A549 (cell line): ENCODE measurements at regions of chr1 and their contacts with region 1.

Region 1: GRCh38 chr1:15028102-15028501 is 125.4 kb upstream of the TMEM51 start:
- DNase-seq: peak in 1 of 2 experiments; percentile 9
- ATAC-seq: no peak; a peak in 1 of 6 replicates
- H3K4me3 ChIP-seq: no peak overlapping the region
- H3K27ac ChIP-seq: no peak overlapping the region
- H3K4me1 ChIP-seq: no peaks in the 10 kb centered on the region
- CTCF ChIP-seq: no peak
- EP300 ChIP-seq: no peak
- POLR2A ChIP-seq: no peak
- RAD21 ChIP-seq: no peak

Region 2: GRCh38 chr1:14994148-14994547 is 34.0 kb before region 1 on chr1:
- CTCF ChIA-PET with region 1: no interaction called
- POLR2A ChIA-PET with region 1: no interaction called
- DNase-seq: no peak
- ATAC-seq: no peak
- H3K4me3 ChIP-seq: no peak overlapping the region
- H3K27ac ChIP-seq: no peak overlapping the region
- H3K4me1 ChIP-seq: no peaks in the 10 kb centered on the region; the same call in 2 of the 3 replicates
- CTCF ChIP-seq: no peak
- EP300 ChIP-seq: no peak
- POLR2A ChIP-seq: no peak
- RAD21 ChIP-seq: no peak

Region 3: GRCh38 chr1:15038232-15039016 is 10.3 kb after region 1 on chr1:
- CTCF ChIA-PET with region 1: interaction called, 16 read pairs
- POLR2A ChIA-PET with region 1: no interaction called
- DNase-seq: peak in 1 of 2 experiments; percentile 69
- ATAC-seq: peak; percentile 74 to 90; a peak in 4 of 6 replicates
- H3K4me3 ChIP-seq: no peak overlapping the region
- H3K27ac ChIP-seq: no peak overlapping the region
- H3K4me1 ChIP-seq: no peaks in the 10 kb centered on the region
- CTCF ChIP-seq: peak; percentile 43
- EP300 ChIP-seq: no peak
- POLR2A ChIP-seq: no peak
- RAD21 ChIP-seq: peak in 1 of 2 experiments; percentile 38; a peak in 2 of 5 replicates